Endothelial cell of umbilical vein (primary cell): ENCODE measurements at regions of chr14 and their contacts with region 1.

Region 1: GRCh38 chr14:93231129-93231979 is 24.3 kb downstream of the UBR7 start:
- DNase-seq: peak; percentile 71
- H3K4me3 ChIP-seq: peak overlapping the region in 2 of 3 experiments; percentile 14 to 37
- H3K27ac ChIP-seq: no peak overlapping the region
- H3K4me1 ChIP-seq: no peaks in the 10 kb centered on the region
- H3K27me3 ChIP-seq: no peaks in the 10 kb centered on the region
- CTCF ChIP-seq: no peak
- POLR2A ChIP-seq: peak; percentile 52

Region 2: DNA sequence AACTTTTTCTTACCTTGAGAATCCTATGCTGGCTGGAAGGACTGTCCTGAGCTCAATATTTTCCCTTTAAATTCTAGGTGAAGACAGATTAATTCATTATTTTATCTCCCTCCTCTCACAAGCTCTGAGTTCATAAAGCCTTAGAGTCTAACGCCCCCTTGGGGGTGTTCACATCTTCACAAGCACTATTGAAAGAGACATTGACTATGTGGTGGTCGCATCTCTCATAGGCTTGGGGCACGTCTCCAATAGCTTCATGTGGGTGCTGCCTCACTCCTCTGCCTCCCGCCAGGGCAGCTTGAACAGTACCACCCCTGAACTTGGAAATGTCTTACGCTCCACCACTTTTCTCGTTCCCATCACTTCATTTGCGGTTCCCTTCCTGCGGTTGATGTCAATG is 305.6 kb after region 1 on chr14:
- CTCF ChIA-PET with region 1: interaction called, 10 read pairs
- POLR2A ChIA-PET with region 1: no interaction called
- dilution Hi-C with region 1: no loop called
- intact Hi-C with region 1: loop called (anchors 2 kb)
- DNase-seq: peak; percentile 5
- H3K4me3 ChIP-seq: no peak overlapping the region
- H3K27ac ChIP-seq: no peak overlapping the region
- H3K4me1 ChIP-seq: no peaks in the 10 kb centered on the region
- H3K27me3 ChIP-seq: no peaks in the 10 kb centered on the region
- CTCF ChIP-seq: peak in 1 of 2 donors; percentile 14
- POLR2A ChIP-seq: no peak

Region 3: DNA sequence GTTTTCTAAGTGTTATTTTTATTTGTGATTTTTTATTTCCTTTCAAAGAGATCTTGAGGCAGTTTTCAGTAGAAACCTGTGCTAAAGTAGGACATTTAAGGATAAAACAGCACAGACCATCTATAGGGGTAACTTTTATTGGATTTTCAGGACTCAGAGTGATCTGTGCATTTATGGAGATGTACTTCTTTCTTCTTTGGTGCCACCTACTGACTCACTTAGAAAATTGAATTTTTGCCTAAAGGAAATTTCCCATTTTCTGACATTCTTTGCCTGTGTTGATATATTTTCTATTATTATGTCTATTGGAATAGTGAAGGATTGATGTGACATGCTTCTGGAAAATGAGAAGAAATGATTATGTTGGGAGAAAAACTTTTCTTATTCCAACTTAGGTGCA is 312.4 kb after region 1 on chr14:
- CTCF ChIA-PET with region 1: interaction called, 3 read pairs
- POLR2A ChIA-PET with region 1: no interaction called
- dilution Hi-C with region 1: no loop called
- intact Hi-C with region 1: loop called (anchors 2 kb)
- DNase-seq: peak; percentile 23
- H3K4me3 ChIP-seq: no peak overlapping the region
- H3K27ac ChIP-seq: no peak overlapping the region
- H3K4me1 ChIP-seq: no peaks in the 10 kb centered on the region
- H3K27me3 ChIP-seq: no peaks in the 10 kb centered on the region
- CTCF ChIP-seq: peak; percentile 15 to 18
- POLR2A ChIP-seq: no peak

Region 4: GRCh38 chr14:93619176-93619793 is 387.9 kb after region 1 on chr14:
- CTCF ChIA-PET with region 1: interaction called, 5 read pairs
- POLR2A ChIA-PET with region 1: no interaction called
- dilution Hi-C with region 1: no loop called
- intact Hi-C with region 1: loop called (anchors 5 kb)
- DNase-seq: peak; percentile 43
- H3K4me3 ChIP-seq: no peak overlapping the region
- H3K27ac ChIP-seq: no peak overlapping the region
- H3K4me1 ChIP-seq: no peaks in the 10 kb centered on the region
- H3K27me3 ChIP-seq: no peaks in the 10 kb centered on the region
- CTCF ChIP-seq: peak; percentile 31 to 43
- POLR2A ChIP-seq: no peak